ENCODE measurements at regions of chr10 and their contacts with region 1.

Region 1: DNA sequence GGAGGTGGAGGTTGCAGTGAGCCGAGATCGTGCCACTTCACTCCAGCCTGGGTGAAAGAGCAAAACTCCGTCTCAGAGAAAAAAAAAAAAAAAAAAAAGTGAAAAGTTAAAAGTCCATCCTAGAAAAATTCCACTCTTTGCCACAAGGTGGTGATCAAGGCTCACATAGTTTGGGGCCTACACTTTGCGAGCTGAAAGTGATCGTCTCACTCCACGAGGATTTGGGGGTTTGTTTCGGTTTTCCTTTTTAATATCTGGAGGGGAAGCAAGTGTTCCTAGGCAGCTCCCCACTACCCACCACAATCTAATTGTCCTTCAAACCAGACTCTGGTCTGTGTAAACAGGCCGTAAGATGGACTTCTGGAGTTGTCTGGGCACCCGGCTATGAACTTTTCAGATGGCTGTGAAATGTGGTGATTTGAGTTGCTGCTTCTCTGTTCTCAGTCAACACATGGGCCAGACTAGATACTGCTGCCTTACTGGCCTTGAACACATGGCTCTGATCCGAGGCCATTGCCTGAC is 27.1 kb downstream of the PRLHR start:
- DNase-seq: peak; percentile 9 to 82 (median 52)
- ATAC-seq: peak; percentile 80
- H3K4me3 ChIP-seq: no peak overlapping the region
- H3K4me3 Mint-ChIP-seq: no peak overlapping the region
- H3K27ac ChIP-seq: no peak overlapping the region
- H3K27ac Mint-ChIP-seq: no peak overlapping the region
- H3K4me1 ChIP-seq: peaks cover 5% of the 10 kb centered on the region
- H3K4me1 Mint-ChIP-seq: peaks cover 6% of the 10 kb centered on the region
- H3K27me3 ChIP-seq: no peaks in the 10 kb centered on the region
- H3K27me3 Mint-ChIP-seq: no peaks in the 10 kb centered on the region
- CTCF ChIP-seq: peak; percentile 72

Region 2: DNA sequence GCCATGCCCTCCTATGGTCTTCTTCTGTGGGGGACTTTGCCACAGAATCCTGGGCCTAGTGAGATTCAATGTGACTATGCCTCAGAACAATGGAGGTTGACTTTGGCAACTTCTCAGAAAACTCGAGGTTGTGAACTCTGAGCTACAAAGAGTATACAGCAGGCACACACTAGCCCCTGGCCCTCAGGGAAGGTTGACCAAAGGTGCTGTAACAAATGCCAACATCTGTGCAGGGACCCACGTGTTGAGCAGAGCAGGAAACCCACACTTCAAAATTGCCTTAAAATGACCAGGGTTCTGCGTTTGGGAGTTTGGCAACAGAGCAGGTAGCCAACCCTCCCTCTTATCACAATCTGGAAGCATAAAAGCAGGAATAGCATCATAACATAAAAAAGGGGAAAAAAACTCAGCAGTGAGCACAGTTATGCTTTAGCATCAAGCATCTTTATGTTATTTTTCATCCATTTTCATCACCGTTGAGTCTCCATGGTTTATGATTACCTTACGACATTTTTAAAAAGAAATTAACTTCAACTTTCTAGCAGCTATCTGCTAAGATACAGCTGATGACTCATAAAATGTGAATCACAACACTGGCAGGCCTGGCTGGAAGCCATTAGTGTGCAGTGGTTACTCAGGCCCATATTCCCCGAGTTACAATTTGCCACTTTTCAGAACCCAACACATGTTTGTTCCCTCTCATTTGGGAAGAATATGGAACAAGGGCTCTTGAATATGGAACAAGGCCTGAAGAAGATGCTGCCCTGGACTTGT is 16.0 kb after region 1 on chr10:
- CTCF ChIA-PET with region 1: interaction called, 19 read pairs
- POLR2A ChIA-PET with region 1: no interaction called
- intact Hi-C with region 1: no loop called
- DNase-seq: no peak
- ATAC-seq: no peak
- H3K4me3 ChIP-seq: no peak overlapping the region
- H3K4me3 Mint-ChIP-seq: no peak overlapping the region
- H3K27ac ChIP-seq: no peak overlapping the region
- H3K27ac Mint-ChIP-seq: no peak overlapping the region
- H3K4me1 ChIP-seq: no peaks in the 10 kb centered on the region
- H3K4me1 Mint-ChIP-seq: no peaks in the 10 kb centered on the region
- H3K27me3 ChIP-seq: no peaks in the 10 kb centered on the region
- H3K27me3 Mint-ChIP-seq: no peaks in the 10 kb centered on the region
- CTCF ChIP-seq: no peak

Region 3: GRCh38 chr10:118712930-118713634 is 144.7 kb after region 1 on chr10:
- CTCF ChIA-PET with region 1: interaction called, 146 read pairs
- POLR2A ChIA-PET with region 1: no interaction called
- intact Hi-C with region 1: no loop called
- DNase-seq: peak in 1 of 9 experiments; percentile 10
- ATAC-seq: no peak
- H3K4me3 ChIP-seq: no peak overlapping the region
- H3K4me3 Mint-ChIP-seq: no peak overlapping the region
- H3K27ac ChIP-seq: no peak overlapping the region
- H3K27ac Mint-ChIP-seq: no peak overlapping the region
- H3K4me1 ChIP-seq: no peaks in the 10 kb centered on the region
- H3K4me1 Mint-ChIP-seq: peaks cover 8% of the 10 kb centered on the region
- H3K27me3 ChIP-seq: no peaks in the 10 kb centered on the region
- H3K27me3 Mint-ChIP-seq: no peaks in the 10 kb centered on the region
- CTCF ChIP-seq: no peak

Region 4: DNA sequence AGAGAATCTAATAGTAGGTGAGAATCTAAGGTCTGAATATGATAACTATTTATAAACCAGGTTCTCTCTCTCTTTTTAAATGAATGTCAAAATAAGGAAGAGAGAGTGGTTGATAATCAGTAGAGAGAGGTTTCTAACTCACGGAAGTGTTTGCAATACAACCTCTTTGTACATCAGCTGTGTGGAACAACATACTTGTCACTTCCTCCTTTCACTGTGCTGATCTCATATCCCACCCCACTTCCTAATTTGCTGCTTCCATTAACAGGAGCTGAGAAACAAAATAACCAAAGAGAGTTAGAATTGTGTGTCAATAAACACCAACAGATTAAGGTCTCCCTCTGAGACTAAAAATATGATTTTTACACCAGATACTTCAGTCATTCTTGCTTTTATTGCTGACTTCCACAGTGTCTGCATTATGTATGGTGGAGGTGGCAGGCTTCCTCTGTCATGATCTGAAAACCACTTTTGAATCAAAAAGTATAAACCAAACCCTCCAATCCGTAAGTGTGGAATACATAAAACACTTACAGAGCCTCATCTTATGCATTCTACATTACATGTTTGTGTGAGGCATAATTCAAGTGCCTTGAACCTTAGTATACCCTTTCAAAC is 161.4 kb after region 1 on chr10:
- CTCF ChIA-PET with region 1: interaction called, 47 read pairs
- POLR2A ChIA-PET with region 1: interaction called, 3 read pairs
- intact Hi-C with region 1: no loop called
- DNase-seq: peak in 2 of 9 experiments; percentile 39 to 66
- ATAC-seq: peak; percentile 74
- H3K4me3 ChIP-seq: no peak overlapping the region
- H3K4me3 Mint-ChIP-seq: peak overlapping the region; percentile 3
- H3K27ac ChIP-seq: peak overlapping the region; percentile 35 to 53
- H3K27ac Mint-ChIP-seq: peak overlapping the region; percentile 79
- H3K4me1 ChIP-seq: peaks cover 57% of the 10 kb centered on the region
- H3K4me1 Mint-ChIP-seq: peaks cover 71% of the 10 kb centered on the region
- H3K27me3 ChIP-seq: no peaks in the 10 kb centered on the region
- H3K27me3 Mint-ChIP-seq: no peaks in the 10 kb centered on the region
- CTCF ChIP-seq: no peak

Region 5: DNA sequence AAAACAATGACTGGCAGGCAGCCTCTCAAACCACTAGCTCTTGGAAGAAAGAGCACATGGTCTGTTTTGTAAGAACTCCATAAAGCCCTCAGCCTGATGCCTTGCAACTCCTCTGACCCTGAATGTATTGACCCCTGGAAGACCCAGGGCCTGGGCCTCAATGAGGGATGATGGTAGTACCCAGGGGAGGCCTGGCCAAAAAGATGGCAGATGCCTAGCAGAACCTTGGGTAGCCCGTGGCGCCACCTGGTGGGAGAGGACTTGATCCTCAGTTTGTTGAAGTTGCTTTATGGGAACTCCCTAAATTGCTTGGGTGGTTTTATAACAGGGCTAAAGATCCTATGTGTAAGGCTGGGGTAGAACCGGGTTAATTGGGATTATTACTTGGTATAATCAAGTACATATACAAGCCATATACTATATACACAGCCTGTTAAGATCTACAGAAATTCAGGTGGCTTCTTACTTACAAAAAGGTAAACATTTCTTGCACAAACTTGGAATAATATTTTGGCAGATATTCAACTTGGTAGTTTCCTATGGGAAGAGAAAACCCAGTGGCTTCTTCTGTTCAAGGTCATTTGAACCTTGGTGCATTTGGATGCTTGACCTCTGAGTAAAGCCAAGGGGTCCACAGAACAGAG is 282.2 kb after region 1 on chr10:
- CTCF ChIA-PET with region 1: interaction called, 3 read pairs
- POLR2A ChIA-PET with region 1: no interaction called
- intact Hi-C with region 1: loop called (anchors 1 kb)
- DNase-seq: peak; percentile 16 to 67 (median 56)
- ATAC-seq: no peak
- H3K4me3 ChIP-seq: no peak overlapping the region
- H3K4me3 Mint-ChIP-seq: no peak overlapping the region
- H3K27ac ChIP-seq: no peak overlapping the region
- H3K27ac Mint-ChIP-seq: no peak overlapping the region
- H3K4me1 ChIP-seq: no peaks in the 10 kb centered on the region
- H3K4me1 Mint-ChIP-seq: no peaks in the 10 kb centered on the region
- H3K27me3 ChIP-seq: no peaks in the 10 kb centered on the region
- H3K27me3 Mint-ChIP-seq: peaks cover 5% of the 10 kb centered on the region
- CTCF ChIP-seq: peak; percentile 37